Heart right ventricle (tissue), 16 donors: ENCODE measurements at regions of chr1 and their contacts with region 1.

Region 1: GRCh38 chr1:62924983-62925790 is 141.3 kb downstream of the ATG4C start:
- DNase-seq: no peak
- ATAC-seq: no peak
- H3K4me3 ChIP-seq: no peak overlapping the region
- H3K27ac ChIP-seq: no peak overlapping the region
- H3K4me1 ChIP-seq: no peaks in the 10 kb centered on the region
- H3K27me3 ChIP-seq: peaks cover 0 to 16% (median 9%) of the 10 kb centered on the region in 7 donors
- CTCF ChIP-seq: no peak

Region 2: DNA sequence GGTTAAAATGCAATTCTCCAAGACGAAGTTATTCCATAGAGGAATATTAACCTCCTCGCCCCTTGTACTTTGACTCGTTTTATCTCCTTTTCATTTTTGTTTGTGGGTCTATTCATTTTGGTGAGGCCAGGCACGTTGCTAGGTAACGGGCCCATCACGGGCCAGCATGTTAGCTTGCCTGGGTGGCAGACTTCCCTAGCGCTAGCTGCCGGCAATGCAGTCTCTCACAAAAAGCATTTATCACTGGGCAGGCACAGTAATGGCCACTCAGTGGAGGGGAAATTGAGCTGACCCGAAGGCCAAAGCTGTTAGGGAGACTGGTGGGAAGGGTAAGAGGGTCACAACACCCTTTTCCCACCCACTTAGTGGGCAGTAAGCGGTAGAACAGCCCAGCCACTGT is 162.8 kb after region 1 on chr1:
- intact Hi-C with region 1: loop called in 1 of 10 experiments (anchors 5 kb)
- DNase-seq: no peak
- ATAC-seq: no peak
- H3K4me3 ChIP-seq: no peak overlapping the region
- H3K27ac ChIP-seq: no peak overlapping the region
- H3K4me1 ChIP-seq: no peaks in the 10 kb centered on the region
- H3K27me3 ChIP-seq: peaks cover 0 to 30% (median 7%) of the 10 kb centered on the region in 7 donors
- CTCF ChIP-seq: no peak

Region 3: GRCh38 chr1:63794939-63795378 is 869.8 kb after region 1 on chr1:
- intact Hi-C with region 1: no loop called
- DNase-seq: no peak
- ATAC-seq: peak in 4 of 8 donors; percentile 3 to 23 (median 12)
- H3K4me3 ChIP-seq: no peak overlapping the region
- H3K27ac ChIP-seq: peak overlapping the region in 4 of 10 donors; percentile 21 to 59 (median 44)
- H3K4me1 ChIP-seq: peaks cover 8 to 96% (median 37%) of the 10 kb centered on the region in 9 donors
- H3K27me3 ChIP-seq: no peaks in the 10 kb centered on the region
- CTCF ChIP-seq: no peak